Activated CD4-positive, alpha-beta T cell treated with anti-CD3 and anti-CD28 coated beads, Interleukin-2, amount 10 ng/mL, durations not matched to agents 24 days and 14 days (primary cell): ENCODE measurements at regions of chr16 and their contacts with region 1.

Region 1: GRCh38 chr16:87636072-87636684 is 33.9 kb downstream of the JPH3 start:
- DNase-seq: peak; percentile 92
- H3K4me3 Mint-ChIP-seq: peak overlapping the region; percentile 73
- H3K27ac Mint-ChIP-seq: no peak overlapping the region
- H3K4me1 Mint-ChIP-seq: peaks cover 7% of the 10 kb centered on the region
- H3K27me3 Mint-ChIP-seq: peaks cover 6% of the 10 kb centered on the region

Region 2: DNA sequence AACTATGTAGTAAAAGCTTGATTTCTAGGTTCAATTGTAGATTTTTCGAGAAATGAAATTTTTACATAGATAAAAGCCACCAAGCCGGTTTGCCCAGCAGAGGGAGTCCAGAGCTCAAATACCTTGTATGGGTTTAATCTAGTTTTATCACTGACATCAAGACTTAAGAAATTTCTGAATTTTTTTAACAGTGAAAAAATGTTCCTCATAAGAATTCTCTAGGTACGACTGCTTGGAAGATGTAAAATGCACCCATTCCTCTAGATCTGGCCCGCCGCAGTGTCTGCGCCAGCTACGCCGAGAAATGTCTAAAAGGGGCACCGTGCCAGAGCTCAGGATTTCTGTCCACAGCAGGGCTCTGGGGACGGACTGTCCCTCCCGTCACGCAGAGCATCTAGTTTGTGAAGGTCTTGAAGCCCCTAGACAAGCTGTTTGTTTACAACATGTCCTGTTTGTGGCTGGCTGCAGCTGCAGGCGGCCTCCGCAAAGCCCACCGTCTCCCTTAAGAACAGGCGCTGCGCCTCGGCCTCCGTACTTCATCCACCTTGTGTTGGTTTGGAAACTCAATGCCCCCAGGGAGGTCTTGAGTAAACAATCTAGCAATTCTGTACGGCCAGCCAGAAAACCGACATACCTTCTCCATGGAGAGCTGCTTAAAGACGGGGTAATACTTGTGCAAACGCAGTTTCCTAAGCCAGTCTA is 219.2 kb before region 1 on chr16:
- intact Hi-C with region 1: loop called (anchors 1 kb)
- DNase-seq: peak; percentile 68
- H3K4me3 Mint-ChIP-seq: no peak overlapping the region
- H3K27ac Mint-ChIP-seq: no peak overlapping the region
- H3K4me1 Mint-ChIP-seq: no peaks in the 10 kb centered on the region
- H3K27me3 Mint-ChIP-seq: no peaks in the 10 kb centered on the region

Region 3: GRCh38 chr16:87550496-87550961 is 85.6 kb before region 1 on chr16:
- intact Hi-C with region 1: loop called (anchors 2 kb)
- DNase-seq: peak; percentile 88
- H3K4me3 Mint-ChIP-seq: no peak overlapping the region
- H3K27ac Mint-ChIP-seq: no peak overlapping the region
- H3K4me1 Mint-ChIP-seq: no peaks in the 10 kb centered on the region
- H3K27me3 Mint-ChIP-seq: peaks cover 2% of the 10 kb centered on the region

Region 4: GRCh38 chr16:87584271-87584670 is 51.9 kb before region 1 on chr16:
- intact Hi-C with region 1: no loop called
- DNase-seq: no peak
- H3K4me3 Mint-ChIP-seq: no peak overlapping the region
- H3K27ac Mint-ChIP-seq: no peak overlapping the region
- H3K4me1 Mint-ChIP-seq: no peaks in the 10 kb centered on the region
- H3K27me3 Mint-ChIP-seq: peaks cover 10% of the 10 kb centered on the region